GM12878 (cell line): ENCODE measurements at regions of chr11 and their contacts with region 1.

Region 1: DNA sequence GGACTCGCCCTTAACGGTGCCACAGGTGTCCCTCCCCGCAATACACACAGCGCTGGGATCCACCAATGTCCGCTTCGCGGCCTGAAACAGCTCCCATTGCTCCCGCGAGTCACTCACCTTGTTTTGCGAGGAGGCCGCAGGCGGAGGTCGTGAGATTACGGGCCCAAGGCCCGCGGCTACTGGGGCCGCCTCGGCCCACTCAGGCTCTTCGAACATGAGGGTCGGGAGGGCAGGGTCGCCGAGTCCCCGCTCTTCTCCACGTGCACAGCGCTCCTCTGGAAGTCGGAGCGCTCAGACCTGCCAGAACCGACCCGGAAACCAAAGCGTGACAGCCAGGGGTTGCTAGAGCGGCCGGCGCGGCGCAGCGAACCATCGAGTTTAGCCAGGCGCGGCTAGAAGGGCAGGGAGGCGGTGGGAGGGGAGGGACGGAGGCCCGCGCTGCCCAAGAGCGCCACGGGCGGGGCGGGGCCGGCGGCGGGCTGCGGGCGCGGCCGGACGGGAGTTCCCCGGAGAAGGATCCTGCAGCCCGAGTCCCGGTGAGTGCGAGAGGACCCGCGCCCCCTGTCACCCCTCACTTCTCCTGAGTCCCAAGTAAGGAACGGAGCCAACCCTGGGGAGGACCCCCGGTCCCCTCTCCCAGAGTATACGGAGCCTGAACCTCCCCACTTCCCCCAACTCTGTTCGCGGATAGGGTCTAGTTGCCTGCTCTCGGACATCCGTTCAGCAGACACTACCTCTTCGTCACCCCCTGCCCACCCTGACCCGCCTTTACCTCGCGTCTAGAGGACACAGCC is at the starts of genes ILK and RRP8:
- DNase-seq: peak; percentile 59
- ATAC-seq: peak; percentile 83
- H3K4me3 ChIP-seq: peak within 1 kb of the TSS; percentile 96
- H3K27ac ChIP-seq: peak within 1 kb of the TSS; percentile 85
- H3K4me1 ChIP-seq: peaks cover 25% of the 10 kb centered on the region
- H3K27me3 ChIP-seq: no peaks in the 10 kb centered on the region
- CTCF ChIP-seq: peak in 1 of 3 experiments; percentile 1; a peak in 1 of 6 replicates
- EP300 ChIP-seq: peak in 1 of 2 experiments; percentile 48; a peak in 1 of 4 replicates
- POLR2A ChIP-seq: peak; percentile 94
- RAD21 ChIP-seq: 0 out of 2 replicates have a peak, but pooled peaks have one; percentile 21
- polyA plus RNA-seq, gene ILK: 51.8 to 77.8 TPM
- polyA plus RNA-seq, gene RRP8: 4.7 to 15.8 TPM

Region 2: DNA sequence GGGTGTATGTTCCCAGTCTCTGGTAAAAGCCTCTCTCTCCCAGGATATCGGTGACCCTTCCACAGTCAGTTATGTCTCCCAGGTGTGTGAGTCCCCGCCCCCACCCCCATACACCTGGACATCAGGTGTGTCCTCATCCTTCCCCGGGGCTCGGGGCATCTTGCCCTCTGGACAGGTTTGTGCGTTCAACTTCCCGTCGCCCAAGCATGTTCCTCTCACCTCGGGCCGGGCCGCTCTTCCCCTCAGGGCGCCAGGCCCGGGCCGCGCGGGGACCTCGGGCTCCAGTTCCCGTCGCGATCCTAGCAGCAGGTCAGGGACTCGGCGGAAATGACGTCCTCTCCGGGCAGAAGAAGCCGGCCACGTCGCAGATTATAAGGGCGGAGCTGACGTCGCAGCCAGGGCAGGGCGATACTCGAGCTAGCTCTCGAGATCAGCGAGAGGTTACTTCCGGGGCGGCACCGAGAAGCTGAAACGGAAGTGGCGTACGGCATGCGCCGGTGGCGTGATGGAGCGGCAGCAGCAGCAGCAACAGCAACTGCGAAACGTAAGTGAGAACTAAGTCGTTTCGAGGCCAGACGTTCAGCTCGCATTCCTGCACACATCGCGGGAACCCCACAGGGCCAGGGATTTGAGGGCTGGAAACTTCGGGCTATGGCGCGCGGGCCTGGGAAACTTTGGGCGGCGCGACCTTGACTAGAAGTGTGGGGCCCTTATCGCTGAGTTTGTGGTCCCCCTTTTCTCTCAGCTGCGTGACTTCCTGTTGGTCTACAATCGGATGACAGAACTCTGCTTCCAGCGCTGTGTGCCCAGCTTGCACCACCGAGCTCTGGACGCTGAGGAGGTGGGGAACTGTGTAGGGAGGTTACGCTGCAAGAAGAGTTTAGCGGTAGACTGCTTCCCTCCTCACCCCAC is 122.2 kb before region 1 on chr11 and contains the starts of genes ARFIP2 and TIMM10B:
- CTCF ChIA-PET with region 1: no interaction called
- POLR2A ChIA-PET with region 1: interaction called, 6 read pairs
- RAD21 ChIA-PET with region 1: no interaction called
- SMC1A ChIA-PET with region 1: no interaction called
- in situ Hi-C with region 1: loop called (anchors 5 kb)
- intact Hi-C with region 1: loop called (anchors 2 kb)
- DNase-seq: peak; percentile 91
- ATAC-seq: peak; percentile 98
- H3K4me3 ChIP-seq: peak within 1 kb of the TSS; percentile 98
- H3K27ac ChIP-seq: peak within 1 kb of the TSS; percentile 80
- H3K4me1 ChIP-seq: peaks cover 19% of the 10 kb centered on the region
- H3K27me3 ChIP-seq: no peaks in the 10 kb centered on the region
- CTCF ChIP-seq: no peak
- EP300 ChIP-seq: no peak
- POLR2A ChIP-seq: peak; percentile 98
- RAD21 ChIP-seq: no peak
- polyA plus RNA-seq, gene ARFIP2: 11.7 to 18.9 TPM
- polyA plus RNA-seq, gene TIMM10B: 93.3 to 126 TPM

Region 3: DNA sequence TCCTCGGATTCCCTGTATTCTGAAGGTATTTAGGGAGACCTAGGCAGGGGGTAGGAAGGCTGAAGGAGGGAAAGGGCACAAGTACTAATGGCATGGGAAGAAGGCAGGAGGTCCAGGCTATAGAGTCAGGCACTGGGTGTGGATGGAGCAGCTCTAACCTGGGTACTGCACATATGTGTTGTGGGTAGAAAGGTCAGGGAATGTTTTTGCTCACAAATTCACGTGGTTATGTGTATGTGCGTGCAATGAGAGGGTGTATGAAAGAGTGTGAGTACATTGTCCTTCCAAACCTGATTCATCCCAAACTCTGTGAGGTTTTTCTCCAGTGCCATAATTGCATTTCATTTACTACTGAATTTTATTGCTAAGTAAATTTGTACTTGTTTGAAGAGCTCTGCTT is 83.2 kb before region 1 on chr11:
- CTCF ChIA-PET with region 1: no interaction called
- POLR2A ChIA-PET with region 1: no interaction called
- RAD21 ChIA-PET with region 1: no interaction called
- SMC1A ChIA-PET with region 1: no interaction called
- in situ Hi-C with region 1: no loop called
- intact Hi-C with region 1: no loop called
- DNase-seq: no peak
- ATAC-seq: no peak
- H3K4me3 ChIP-seq: no peak overlapping the region
- H3K27ac ChIP-seq: no peak overlapping the region
- H3K4me1 ChIP-seq: no peaks in the 10 kb centered on the region
- H3K27me3 ChIP-seq: no peaks in the 10 kb centered on the region
- CTCF ChIP-seq: no peak
- EP300 ChIP-seq: no peak
- POLR2A ChIP-seq: no peak
- RAD21 ChIP-seq: no peak

Region 4: DNA sequence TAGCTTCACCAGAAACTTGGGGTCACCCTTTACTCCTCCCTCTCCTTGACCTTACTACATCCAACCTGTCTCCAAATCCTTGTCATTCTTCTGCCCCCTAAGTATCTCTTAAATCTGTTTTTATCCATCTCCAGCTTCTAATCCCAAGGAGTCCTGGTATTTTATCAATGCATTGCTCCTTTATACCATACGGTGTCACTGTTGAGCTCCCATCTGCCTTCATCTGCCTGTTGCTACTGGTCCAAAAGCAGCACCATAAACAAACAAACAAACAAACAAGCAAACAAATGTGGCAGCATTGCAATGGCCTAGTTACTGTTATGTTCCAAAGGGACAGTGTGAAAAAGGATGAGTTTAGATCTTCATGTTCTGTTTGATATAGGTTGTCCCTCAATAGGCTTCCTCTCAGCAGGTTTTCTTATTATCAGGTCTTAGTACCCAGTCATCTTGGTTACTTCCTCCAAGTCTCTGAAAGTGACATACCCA is 72.2 kb before region 1 on chr11:
- CTCF ChIA-PET with region 1: interaction called, 9 read pairs
- POLR2A ChIA-PET with region 1: interaction called, 3 read pairs
- RAD21 ChIA-PET with region 1: interaction called, 7 read pairs
- SMC1A ChIA-PET with region 1: interaction called, 5 read pairs
- in situ Hi-C with region 1: no loop called
- intact Hi-C with region 1: loop called (anchors 2 kb)
- DNase-seq: peak; percentile 27
- ATAC-seq: peak; percentile 80
- H3K4me3 ChIP-seq: no peak overlapping the region
- H3K27ac ChIP-seq: no peak overlapping the region
- H3K4me1 ChIP-seq: peaks cover 8% of the 10 kb centered on the region; the same call in 1 of the 2 replicates
- H3K27me3 ChIP-seq: no peaks in the 10 kb centered on the region
- CTCF ChIP-seq: peak; percentile 66 to 73 (median 70)
- EP300 ChIP-seq: no peak
- POLR2A ChIP-seq: no peak
- RAD21 ChIP-seq: peak; percentile 89

Region 5: DNA sequence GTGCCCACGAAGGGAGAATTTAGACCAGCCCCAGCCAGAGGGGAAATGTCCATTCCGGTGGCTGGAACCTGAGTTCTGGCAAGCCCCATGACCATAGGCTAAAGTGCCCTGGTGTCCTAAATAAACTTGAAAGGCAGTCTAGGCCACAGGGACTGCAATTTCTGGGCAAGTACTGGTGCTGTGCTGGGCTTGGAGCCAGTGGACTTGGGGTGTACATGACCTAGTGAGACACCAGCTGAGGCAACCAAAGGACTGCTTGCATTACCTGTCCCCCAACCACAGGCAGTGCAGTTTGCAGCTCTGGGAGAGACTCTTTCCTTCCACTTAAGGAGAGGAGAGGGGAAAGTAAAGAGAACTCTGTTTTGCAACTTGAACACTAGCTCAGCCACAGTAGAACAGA is 23.8 kb before region 1 on chr11:
- CTCF ChIA-PET with region 1: no interaction called
- POLR2A ChIA-PET with region 1: no interaction called
- RAD21 ChIA-PET with region 1: no interaction called
- SMC1A ChIA-PET with region 1: no interaction called
- in situ Hi-C with region 1: no loop called
- intact Hi-C with region 1: no loop called
- DNase-seq: no peak
- ATAC-seq: no peak
- H3K4me3 ChIP-seq: no peak overlapping the region
- H3K27ac ChIP-seq: no peak overlapping the region
- H3K4me1 ChIP-seq: no peaks in the 10 kb centered on the region
- H3K27me3 ChIP-seq: no peaks in the 10 kb centered on the region
- CTCF ChIP-seq: no peak
- EP300 ChIP-seq: no peak
- POLR2A ChIP-seq: no peak
- RAD21 ChIP-seq: no peak

Region 6: DNA sequence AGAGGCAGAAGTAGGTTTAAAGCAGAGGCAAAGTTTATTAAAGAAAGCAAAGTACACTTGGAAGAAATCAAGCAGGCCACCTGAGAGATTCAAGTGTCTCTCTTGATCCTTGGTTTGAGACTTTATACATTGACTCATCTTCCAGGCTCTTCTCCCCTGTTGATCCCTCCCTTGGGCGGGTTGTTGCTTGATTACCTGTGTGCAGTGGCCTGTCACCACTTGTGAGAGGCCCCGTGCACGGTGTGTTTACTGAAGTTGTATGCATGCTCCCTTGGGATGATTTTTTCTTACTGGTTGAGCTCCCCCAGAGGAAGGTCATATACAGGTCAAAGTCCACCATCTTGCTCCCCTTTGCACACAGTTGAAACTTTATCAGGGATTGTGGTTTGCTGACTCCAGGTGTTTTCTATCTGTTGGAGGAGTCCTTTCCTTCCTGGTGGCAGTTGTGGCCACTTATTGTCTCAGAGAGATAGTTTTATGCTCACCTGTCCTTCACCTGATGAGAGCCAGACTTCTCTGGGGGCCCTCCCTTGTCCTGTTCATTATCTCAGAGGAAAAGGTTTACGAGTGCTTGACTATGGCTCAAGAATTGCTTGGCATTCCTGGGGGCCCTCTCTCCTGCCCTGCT is 469.0 kb after region 1 on chr11:
- CTCF ChIA-PET with region 1: no interaction called
- POLR2A ChIA-PET with region 1: no interaction called
- RAD21 ChIA-PET with region 1: no interaction called
- SMC1A ChIA-PET with region 1: no interaction called
- in situ Hi-C with region 1: no loop called
- intact Hi-C with region 1: no loop called
- DNase-seq: no peak
- ATAC-seq: no peak
- H3K4me3 ChIP-seq: no peak overlapping the region
- H3K27ac ChIP-seq: no peak overlapping the region
- H3K4me1 ChIP-seq: no peaks in the 10 kb centered on the region
- H3K27me3 ChIP-seq: no peaks in the 10 kb centered on the region
- CTCF ChIP-seq: no peak
- EP300 ChIP-seq: no peak
- POLR2A ChIP-seq: no peak
- RAD21 ChIP-seq: no peak